ENCODE measurements at regions of chr13 and their contacts with region 1.

Region 1: DNA sequence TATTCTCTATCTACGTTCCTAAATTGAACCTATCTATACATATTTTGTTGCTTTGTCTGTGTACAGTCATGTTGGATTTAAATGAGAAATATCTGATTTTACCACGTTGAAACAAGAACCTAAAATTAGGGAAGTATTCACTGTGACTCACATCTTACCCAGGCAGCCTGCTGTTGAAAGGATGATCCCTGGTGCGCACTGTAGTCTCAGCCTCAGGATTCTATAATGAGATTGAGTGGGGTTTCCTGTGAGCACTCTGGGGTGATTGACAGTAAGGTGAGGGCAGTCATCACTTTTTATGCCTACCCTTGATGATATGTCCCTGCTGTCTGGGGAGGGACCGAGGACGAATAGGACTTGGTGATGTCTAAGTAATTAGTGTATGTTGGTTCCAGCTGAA is 35.4 kb downstream of the PCCA start:
- DNase-seq: no peak
- H3K4me3 Mint-ChIP-seq: no peak overlapping the region
- H3K27ac Mint-ChIP-seq: no peak overlapping the region
- H3K4me1 Mint-ChIP-seq: no peaks in the 10 kb centered on the region
- H3K27me3 Mint-ChIP-seq: no peaks in the 10 kb centered on the region
- CTCF ChIP-seq: no peak

Region 2: DNA sequence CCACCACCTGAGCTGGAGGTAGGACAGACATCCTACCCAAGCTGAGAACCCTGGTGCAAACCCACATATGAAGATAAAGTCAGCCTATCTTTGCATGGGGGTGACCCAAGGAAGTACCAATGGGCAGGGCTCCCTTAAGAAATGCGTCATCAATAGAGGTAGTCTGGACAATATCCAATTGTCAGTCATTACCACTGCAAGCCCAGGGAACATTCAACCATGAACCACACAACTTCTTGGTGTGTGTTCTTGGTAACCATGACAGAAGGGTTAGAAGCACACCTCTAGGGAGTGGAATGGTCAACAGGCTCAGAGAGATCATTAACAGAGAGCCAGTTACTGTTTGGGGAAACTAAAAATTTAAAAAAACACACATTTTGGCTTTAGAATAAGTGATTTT is 1111.7 kb before region 1 on chr13:
- CTCF ChIA-PET with region 1: interaction called, 13 read pairs
- intact Hi-C with region 1: no loop called
- DNase-seq: no peak
- H3K4me3 Mint-ChIP-seq: no peak overlapping the region
- H3K27ac Mint-ChIP-seq: no peak overlapping the region
- H3K4me1 Mint-ChIP-seq: peaks cover 9% of the 10 kb centered on the region
- H3K27me3 Mint-ChIP-seq: no peaks in the 10 kb centered on the region
- CTCF ChIP-seq: no peak

Region 3: DNA sequence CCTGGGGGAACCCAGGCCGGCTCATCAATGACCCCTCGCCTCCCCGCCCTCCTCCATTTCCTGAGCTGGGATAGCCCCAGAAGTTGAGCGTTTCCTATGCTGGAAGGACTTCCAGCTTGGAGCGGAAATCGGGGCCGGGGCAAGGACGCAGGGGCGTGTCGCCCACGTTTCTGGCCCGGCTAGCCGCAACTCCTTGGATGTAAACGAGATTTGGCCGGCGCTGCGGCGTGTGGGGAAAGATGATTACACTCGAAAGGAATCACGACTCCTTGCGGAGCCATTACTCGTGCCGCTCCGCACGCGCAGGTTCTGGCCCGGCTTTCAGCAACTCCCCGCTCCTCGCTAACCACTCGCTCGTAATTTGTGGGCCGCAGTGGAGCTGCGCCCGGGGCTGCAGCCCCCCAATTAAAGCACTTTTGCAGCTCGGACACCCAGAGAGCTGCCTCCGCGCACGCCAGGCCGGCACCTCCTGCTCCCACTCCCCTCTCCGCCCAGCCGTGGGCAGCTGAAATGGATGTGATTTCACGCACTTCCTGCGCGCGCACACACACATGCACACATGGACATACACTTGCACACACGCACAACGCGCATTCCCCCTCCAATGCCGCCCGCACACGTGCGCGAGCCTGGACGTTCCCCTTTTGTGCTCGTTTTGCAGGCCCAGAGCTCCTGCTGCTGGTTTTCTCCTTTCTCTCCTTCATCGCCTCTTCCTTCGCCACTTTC is 168.4 kb before region 1 on chr13:
- CTCF ChIA-PET with region 1: no interaction called
- intact Hi-C with region 1: no loop called
- DNase-seq: no peak
- H3K4me3 Mint-ChIP-seq: no peak overlapping the region
- H3K27ac Mint-ChIP-seq: no peak overlapping the region
- H3K4me1 Mint-ChIP-seq: no peaks in the 10 kb centered on the region
- H3K27me3 Mint-ChIP-seq: no peaks in the 10 kb centered on the region
- CTCF ChIP-seq: no peak

Region 4: GRCh38 chr13:101218484-101218883 is 1094.2 kb after region 1 on chr13:
- CTCF ChIA-PET with region 1: no interaction called
- intact Hi-C with region 1: no loop called
- DNase-seq: no peak
- H3K4me3 Mint-ChIP-seq: no peak overlapping the region
- H3K27ac Mint-ChIP-seq: no peak overlapping the region
- H3K4me1 Mint-ChIP-seq: no peaks in the 10 kb centered on the region
- H3K27me3 Mint-ChIP-seq: no peaks in the 10 kb centered on the region
- CTCF ChIP-seq: no peak